Sciatic nerve (tissue), 2 donors: ENCODE measurements at regions of chr15 and their contacts with region 1.

Region 1: GRCh38 chr15:78681281-78682003 is 40.4 kb upstream of the CHRNB4 start:
- DNase-seq: peak; percentile 19
- ATAC-seq: no peak

Region 2: DNA sequence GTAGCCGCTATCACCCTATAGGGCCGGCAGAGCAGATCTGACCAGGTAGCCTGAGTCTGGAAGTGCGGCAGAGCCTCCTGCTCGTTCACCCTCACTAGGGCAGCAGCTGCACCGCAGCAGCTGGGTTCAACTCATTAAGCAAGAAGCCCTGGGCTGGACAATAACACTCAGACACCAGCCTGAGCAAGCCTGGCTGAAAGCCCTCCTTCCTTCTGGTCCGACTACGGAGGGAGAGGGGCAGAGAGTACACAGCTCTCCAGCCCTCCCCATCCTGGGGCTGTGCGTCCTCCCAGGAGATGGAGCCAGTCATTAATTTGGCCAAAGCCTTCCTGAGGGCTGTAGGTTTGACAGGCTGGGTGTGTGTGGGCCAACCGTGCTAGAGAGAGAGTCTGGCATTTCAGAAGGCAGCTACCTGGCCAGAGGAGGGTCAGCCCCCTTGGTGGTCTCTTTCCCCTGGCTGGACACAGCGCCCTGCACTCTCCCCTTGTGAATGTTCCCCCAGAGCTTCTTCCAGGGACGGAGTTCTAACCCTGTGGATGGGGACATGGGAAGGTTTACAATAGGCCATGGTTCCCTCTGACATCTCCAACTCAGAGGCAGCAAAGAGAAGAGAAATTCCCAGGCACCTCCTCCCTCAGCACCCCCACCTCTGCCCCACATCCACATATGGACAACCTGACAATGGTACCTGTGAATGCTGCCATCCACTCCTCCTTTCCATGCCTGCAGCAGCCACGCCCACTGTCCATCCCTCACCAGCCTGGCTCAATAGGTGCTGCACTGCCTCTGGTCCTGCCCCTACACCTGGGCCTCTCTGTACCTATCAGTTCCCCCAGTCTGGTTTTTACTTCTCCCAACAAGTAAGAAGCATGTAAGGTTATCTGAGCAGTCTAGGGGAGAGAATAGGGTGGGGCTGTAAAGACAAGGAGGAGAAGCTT is 47.0 kb before region 1 on chr15:
- intact Hi-C with region 1: loop called (anchors 1 kb)
- DNase-seq: no peak
- ATAC-seq: no peak

Region 3: GRCh38 chr15:78726870-78727551 is 45.6 kb after region 1 on chr15:
- intact Hi-C with region 1: no loop called
- DNase-seq: no peak
- ATAC-seq: no peak